ENCODE measurements at regions of chr17 and their contacts with region 1.

Region 1: GRCh38 chr17:3026856-3027751 is 36.3 kb downstream of the OR1D5 start:
- DNase-seq: no peak
- H3K4me3 ChIP-seq: no peak overlapping the region
- H3K27ac ChIP-seq: no peak overlapping the region
- H3K4me1 ChIP-seq: no peaks in the 10 kb centered on the region
- H3K27me3 ChIP-seq: no peaks in the 10 kb centered on the region
- CTCF ChIP-seq: no peak

Region 2: DNA sequence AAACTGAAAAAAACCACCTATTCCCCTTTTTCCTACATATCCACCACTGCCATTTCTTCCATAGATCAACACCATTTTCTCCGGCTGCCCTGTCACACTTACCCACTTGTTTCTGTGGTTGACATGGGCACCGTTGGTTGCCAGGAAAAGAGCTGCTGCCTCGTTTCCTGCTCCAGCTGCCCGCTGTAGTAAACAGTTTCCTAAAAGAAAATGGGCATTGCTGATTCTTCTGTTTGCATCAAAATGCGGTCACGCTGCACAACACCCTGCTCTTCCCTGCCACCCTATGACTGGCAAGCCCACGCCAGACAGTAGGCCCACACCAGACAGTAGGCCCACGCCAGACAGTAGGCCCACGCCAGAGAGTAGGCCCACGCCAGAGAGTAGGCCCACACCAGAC is 1162.2 kb after region 1 on chr17:
- CTCF ChIA-PET with region 1: no interaction called
- POLR2A ChIA-PET with region 1: interaction called, 12 read pairs
- intact Hi-C with region 1: no loop called
- DNase-seq: no peak
- H3K4me3 ChIP-seq: no peak overlapping the region
- H3K27ac ChIP-seq: no peak overlapping the region
- H3K4me1 ChIP-seq: no peaks in the 10 kb centered on the region
- H3K27me3 ChIP-seq: no peaks in the 10 kb centered on the region
- CTCF ChIP-seq: no peak